ENCODE measurements at regions of chr11 and their contacts with region 1.

Region 1: GRCh38 chr11:122505304-122506006 is 150.1 kb upstream of the UBASH3B start:
- DNase-seq: peak; percentile 43 to 66
- H3K4me3 ChIP-seq: no peak overlapping the region
- H3K27ac ChIP-seq: no peak overlapping the region
- H3K4me1 ChIP-seq: no peaks in the 10 kb centered on the region
- H3K27me3 ChIP-seq: no peaks in the 10 kb centered on the region
- CTCF ChIP-seq: peak; percentile 92

Region 2: GRCh38 chr11:121194731-121195596 is 1310.5 kb before region 1 on chr11:
- CTCF ChIA-PET with region 1: no interaction called
- POLR2A ChIA-PET with region 1: no interaction called
- intact Hi-C with region 1: loop called (anchors 5 kb)
- DNase-seq: peak in 1 of 2 experiments; percentile 29
- H3K4me3 ChIP-seq: no peak overlapping the region
- H3K27ac ChIP-seq: no peak overlapping the region
- H3K4me1 ChIP-seq: no peaks in the 10 kb centered on the region
- H3K27me3 ChIP-seq: peaks cover 97% of the 10 kb centered on the region
- CTCF ChIP-seq: peak; percentile 97

Region 3: DNA sequence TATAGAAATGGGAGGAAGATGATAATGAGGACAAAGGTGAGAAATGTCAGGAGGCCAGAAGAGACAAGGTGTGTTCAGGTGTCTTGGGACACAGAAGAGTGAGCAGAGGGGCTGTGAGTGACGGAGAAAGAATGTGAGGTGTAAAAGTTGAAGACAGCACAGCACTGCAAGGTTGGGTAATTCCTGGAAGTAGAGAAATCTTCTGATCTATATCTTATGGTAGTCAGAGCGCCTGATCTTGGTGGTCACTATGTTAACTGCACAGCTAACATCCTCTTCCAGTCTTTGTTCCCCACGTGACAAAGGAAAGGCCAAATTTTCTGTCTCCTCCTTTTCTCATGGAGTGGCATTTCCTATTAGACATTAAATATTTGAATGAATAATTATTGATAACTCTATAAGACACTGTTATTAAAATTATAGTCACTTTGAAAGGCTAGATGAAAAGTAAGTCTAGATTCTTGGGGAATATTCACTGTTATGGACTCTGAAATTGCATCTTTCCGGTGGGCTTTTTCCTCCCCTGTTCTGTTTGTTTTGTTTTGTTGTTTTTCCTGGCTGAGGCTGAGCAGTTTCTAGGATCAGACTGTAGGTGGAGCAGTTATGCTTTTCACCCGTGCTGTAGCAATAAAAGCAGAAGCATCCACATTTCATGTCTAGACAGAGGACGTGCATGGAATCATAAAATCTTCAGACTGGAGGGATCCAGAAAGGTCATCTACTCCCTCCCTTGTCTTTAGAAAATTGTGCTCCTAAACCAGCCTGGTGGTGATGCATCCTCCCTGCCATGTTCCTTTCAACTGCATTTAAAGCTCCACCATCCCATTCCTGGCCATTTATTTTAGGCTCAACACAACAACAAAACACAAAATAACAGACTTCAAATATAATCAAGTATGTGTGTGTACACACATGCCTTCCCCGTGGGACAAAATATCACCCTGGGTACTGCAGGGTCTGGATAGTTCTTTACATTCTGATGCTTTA is 1186.3 kb before region 1 on chr11:
- CTCF ChIA-PET with region 1: interaction called, 5 read pairs
- POLR2A ChIA-PET with region 1: no interaction called
- intact Hi-C with region 1: loop called (anchors 2 kb)
- DNase-seq: peak in 1 of 2 experiments; percentile 2
- H3K4me3 ChIP-seq: no peak overlapping the region
- H3K27ac ChIP-seq: no peak overlapping the region
- H3K4me1 ChIP-seq: no peaks in the 10 kb centered on the region
- H3K27me3 ChIP-seq: peaks cover 58% of the 10 kb centered on the region
- CTCF ChIP-seq: peak; percentile 85

Region 4: GRCh38 chr11:122215244-122215992 is 290.0 kb before region 1 on chr11:
- CTCF ChIA-PET with region 1: no interaction called
- POLR2A ChIA-PET with region 1: no interaction called
- intact Hi-C with region 1: loop called (anchors 1 kb)
- DNase-seq: peak in 1 of 2 experiments; percentile 59
- H3K4me3 ChIP-seq: no peak overlapping the region
- H3K27ac ChIP-seq: no peak overlapping the region
- H3K4me1 ChIP-seq: peaks cover 4% of the 10 kb centered on the region
- H3K27me3 ChIP-seq: no peaks in the 10 kb centered on the region
- CTCF ChIP-seq: peak; percentile 93

Region 5: GRCh38 chr11:122375687-122376398 is 129.6 kb before region 1 on chr11:
- CTCF ChIA-PET with region 1: no interaction called
- POLR2A ChIA-PET with region 1: no interaction called
- intact Hi-C with region 1: loop called (anchors 10 kb)
- DNase-seq: peak in 1 of 2 experiments; percentile 17
- H3K4me3 ChIP-seq: no peak overlapping the region
- H3K27ac ChIP-seq: no peak overlapping the region
- H3K4me1 ChIP-seq: no peaks in the 10 kb centered on the region
- H3K27me3 ChIP-seq: no peaks in the 10 kb centered on the region; the same call in 1 of the 2 replicates
- CTCF ChIP-seq: no peak

Region 6: DNA sequence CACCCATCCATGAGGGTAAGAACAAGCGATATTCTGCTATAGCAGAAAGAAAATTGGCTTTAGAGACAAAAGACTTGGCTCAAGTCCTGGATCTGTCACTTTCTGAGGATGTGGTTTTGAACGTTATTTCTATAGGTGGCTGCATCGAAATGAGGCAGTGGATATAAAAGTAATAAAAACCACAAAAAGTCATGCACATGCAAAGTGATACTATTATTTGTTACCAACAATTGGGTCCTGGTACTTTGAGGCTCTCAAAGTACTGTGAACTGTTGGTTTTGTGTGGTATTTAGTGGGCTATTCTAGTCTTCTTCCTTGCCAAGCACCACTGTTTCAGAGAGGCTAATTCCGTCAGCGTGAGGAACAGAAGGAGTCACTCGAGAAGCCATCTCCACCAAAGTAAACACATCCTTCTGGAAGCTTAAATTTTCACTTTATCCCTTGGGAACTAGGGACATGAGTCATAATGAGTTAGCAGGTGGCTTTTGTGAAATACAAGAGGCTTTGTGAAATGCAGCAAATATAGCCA is 163.2 kb after region 1 on chr11:
- CTCF ChIA-PET with region 1: no interaction called
- POLR2A ChIA-PET with region 1: no interaction called
- intact Hi-C with region 1: no loop called
- DNase-seq: peak in 1 of 2 experiments; percentile 94
- H3K4me3 ChIP-seq: peak overlapping the region; percentile 4; the same call in 1 of the 2 replicates
- H3K27ac ChIP-seq: peak overlapping the region; percentile 90
- H3K4me1 ChIP-seq: peaks cover 86% of the 10 kb centered on the region
- H3K27me3 ChIP-seq: no peaks in the 10 kb centered on the region
- CTCF ChIP-seq: no peak

Measured in PC-9 (cell line).